ENCODE measurements at regions of chrX and their contacts with region 1.

Region 1: DNA sequence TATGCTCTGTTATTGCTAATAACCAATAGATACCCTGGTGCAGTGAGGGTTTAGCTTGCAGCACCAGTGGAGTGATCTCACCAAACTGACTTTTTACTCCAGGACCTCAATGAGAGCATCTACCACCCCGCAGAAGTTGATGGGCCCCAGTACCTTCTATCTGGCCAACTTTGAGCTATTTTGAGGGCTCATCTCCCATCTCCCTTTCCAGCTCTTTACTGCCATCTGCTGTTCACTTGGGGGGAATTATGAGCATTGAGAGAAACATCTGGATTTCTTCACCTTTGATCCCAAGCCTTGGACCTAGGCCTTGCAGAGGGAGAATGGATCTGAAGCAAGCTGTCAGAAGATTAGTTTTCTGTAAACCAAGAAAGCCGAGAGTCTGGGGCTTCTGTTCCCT is 143.6 kb downstream of the TMEM164 start:
- DNase-seq: peak; percentile 40
- CTCF ChIP-seq: peak; percentile 51

Region 2: GRCh38 chrX:109475174-109475891 is 671.2 kb before region 1 on chrX:
- in situ Hi-C with region 1: loop called (anchors 10 kb)
- DNase-seq: no peak
- CTCF ChIP-seq: peak; percentile 27

Region 3: DNA sequence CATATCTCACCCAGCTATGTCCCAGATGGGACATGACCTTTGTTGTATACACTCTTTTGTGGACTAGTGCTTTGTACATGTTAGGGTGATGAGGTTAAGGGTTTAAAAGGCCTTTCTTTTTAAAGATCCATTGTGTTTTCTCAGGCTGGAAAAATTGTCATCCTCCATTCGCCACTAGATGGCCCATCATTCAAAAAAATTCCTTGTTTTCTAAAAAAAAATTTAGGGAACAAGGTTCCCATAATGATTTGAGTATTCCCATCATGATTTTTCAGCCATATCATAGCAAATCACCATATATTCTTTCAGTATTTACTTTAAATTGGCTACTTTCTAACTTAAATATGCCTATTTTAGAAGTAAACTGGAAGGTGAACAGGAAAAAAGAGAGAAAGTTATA is 235.5 kb before region 1 on chrX:
- in situ Hi-C with region 1: loop called (anchors 25 kb)
- DNase-seq: no peak
- CTCF ChIP-seq: peak; percentile 22

Region 4: GRCh38 chrX:110373310-110373709 is 226.8 kb after region 1 on chrX:
- in situ Hi-C with region 1: no loop called
- DNase-seq: no peak
- CTCF ChIP-seq: no peak

Measured in GM13976 (cell line).